ENCODE measurements at regions of chr17 and their contacts with region 1.

Region 1: GRCh38 chr17:83200202-83200699 is 120.8 kb downstream of the METRNL start:
- DNase-seq: peak in 4 of 5 donors; percentile 58 to 83 (median 72)
- H3K4me3 ChIP-seq: peak overlapping the region; percentile 51
- H3K4me3 Mint-ChIP-seq: peak overlapping the region; percentile 85 to 95 (median 89)
- H3K27ac ChIP-seq: peak overlapping the region; percentile 90
- H3K27ac Mint-ChIP-seq: peak overlapping the region; percentile 95 to 99 (median 98)
- H3K4me1 ChIP-seq: peaks cover 37% of the 10 kb centered on the region
- H3K4me1 Mint-ChIP-seq: peaks cover 30 to 50% (median 43%) of the 10 kb centered on the region in 3 donors
- H3K27me3 ChIP-seq: no peaks in the 10 kb centered on the region
- H3K27me3 Mint-ChIP-seq: peaks cover 0 to 6% of the 10 kb centered on the region in 2 donors

Region 2: GRCh38 chr17:82781894-82782274 is 418.4 kb before region 1 on chr17:
- CTCF ChIA-PET with region 1: interaction called, 15 read pairs
- POLR2A ChIA-PET with region 1: no interaction called
- DNase-seq: peak; percentile 76 to 90 (median 80)
- H3K4me3 ChIP-seq: no peak overlapping the region
- H3K4me3 Mint-ChIP-seq: no peak overlapping the region
- H3K27ac ChIP-seq: no peak overlapping the region
- H3K27ac Mint-ChIP-seq: peak overlapping the region in 6 of 8 donors; percentile 6 to 84 (median 37)
- H3K4me1 ChIP-seq: peaks cover 6% of the 10 kb centered on the region
- H3K4me1 Mint-ChIP-seq: peaks cover 15 to 22% (median 20%) of the 10 kb centered on the region in 3 donors
- H3K27me3 ChIP-seq: no peaks in the 10 kb centered on the region
- H3K27me3 Mint-ChIP-seq: peaks cover 0 to 1% of the 10 kb centered on the region in 2 donors

Region 3: DNA sequence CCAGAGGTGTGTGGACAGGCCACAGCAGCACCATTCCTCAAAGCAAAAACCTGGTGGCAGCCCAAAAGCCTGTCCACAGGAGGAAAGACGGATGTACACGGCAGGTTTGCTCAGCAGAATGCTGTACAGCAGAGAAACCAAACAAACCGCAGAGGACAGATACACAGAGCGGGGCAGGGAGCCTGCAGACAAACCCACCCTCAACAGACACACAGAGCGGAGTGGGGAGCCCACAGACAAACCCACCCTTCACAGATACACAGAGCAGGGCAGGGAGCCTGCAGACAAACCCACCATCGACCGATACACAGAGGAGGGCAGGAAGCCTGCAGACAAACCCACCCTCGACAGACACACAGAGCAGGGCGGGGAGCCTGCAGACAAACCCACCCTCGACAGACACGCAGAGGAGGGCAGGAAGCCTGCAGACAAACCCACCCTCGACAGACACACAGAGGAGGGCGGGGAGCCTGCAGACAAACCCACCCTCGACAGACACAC is 173.9 kb before region 1 on chr17:
- CTCF ChIA-PET with region 1: no interaction called
- POLR2A ChIA-PET with region 1: no interaction called
- DNase-seq: peak in 2 of 5 donors; percentile 18 to 41
- H3K4me3 ChIP-seq: no peak overlapping the region
- H3K4me3 Mint-ChIP-seq: peak overlapping the region in 5 of 7 donors; percentile 22 to 84 (median 65)
- H3K27ac ChIP-seq: no peak overlapping the region
- H3K27ac Mint-ChIP-seq: peak overlapping the region in 7 of 8 donors; percentile 18 to 83 (median 70)
- H3K4me1 ChIP-seq: no peaks in the 10 kb centered on the region
- H3K4me1 Mint-ChIP-seq: peaks cover 27 to 36% (median 34%) of the 10 kb centered on the region in 3 donors
- H3K27me3 ChIP-seq: no peaks in the 10 kb centered on the region
- H3K27me3 Mint-ChIP-seq: peaks cover 0 to 3% of the 10 kb centered on the region in 2 donors

Region 4: DNA sequence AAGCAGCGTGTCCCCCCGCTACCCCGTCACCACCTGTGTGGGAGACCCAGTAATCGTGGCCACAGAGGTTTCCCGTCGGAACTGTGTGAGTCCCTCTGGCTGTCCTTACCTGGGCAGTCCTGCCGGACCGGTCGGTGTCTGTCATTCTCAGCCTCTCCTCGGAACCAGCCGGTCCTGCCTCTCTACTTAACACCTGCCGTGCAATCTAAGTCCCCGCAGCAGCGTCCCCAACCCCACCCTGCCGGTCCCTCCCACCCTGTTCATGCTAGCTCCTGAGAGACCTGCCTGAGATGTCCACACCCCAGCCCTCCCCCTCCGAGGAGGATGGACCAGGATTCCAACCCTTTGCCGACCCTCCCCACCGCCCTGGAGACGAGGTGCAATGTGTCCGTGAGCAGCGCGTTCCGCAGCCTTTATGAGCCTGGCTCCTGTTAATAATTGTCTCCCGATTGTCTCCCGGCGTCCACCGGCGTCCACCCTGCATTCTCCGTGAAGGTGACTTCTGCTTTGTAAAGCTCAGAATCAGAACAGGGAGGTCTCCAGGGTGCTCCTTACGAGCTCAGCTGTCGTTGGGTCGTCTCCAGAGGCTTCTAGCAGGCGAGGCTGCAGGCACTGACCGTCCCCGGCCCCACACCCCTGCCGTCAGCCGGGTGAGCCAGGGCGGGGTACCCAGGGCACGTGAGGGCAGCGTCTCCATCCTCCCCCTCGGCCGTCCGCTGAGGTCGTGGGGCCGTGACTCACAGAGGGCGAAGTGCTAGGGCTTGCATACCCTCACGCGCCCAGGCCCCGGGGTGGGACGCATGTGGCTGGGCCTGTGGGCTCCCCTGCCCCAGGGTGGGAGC is 110.7 kb before region 1 on chr17:
- CTCF ChIA-PET with region 1: no interaction called
- POLR2A ChIA-PET with region 1: no interaction called
- DNase-seq: no peak
- H3K4me3 ChIP-seq: no peak overlapping the region
- H3K4me3 Mint-ChIP-seq: peak overlapping the region in 1 of 7 donors; percentile 76
- H3K27ac ChIP-seq: no peak overlapping the region
- H3K27ac Mint-ChIP-seq: peak overlapping the region in 1 of 8 donors; percentile 88
- H3K4me1 ChIP-seq: peaks cover 14% of the 10 kb centered on the region
- H3K4me1 Mint-ChIP-seq: peaks cover 5 to 38% (median 17%) of the 10 kb centered on the region in 3 donors
- H3K27me3 ChIP-seq: no peaks in the 10 kb centered on the region
- H3K27me3 Mint-ChIP-seq: no peaks in the 10 kb centered on the region

Region 5: GRCh38 chr17:83174285-83175118 is 25.7 kb before region 1 on chr17:
- CTCF ChIA-PET with region 1: no interaction called
- POLR2A ChIA-PET with region 1: no interaction called
- DNase-seq: no peak
- H3K4me3 ChIP-seq: no peak overlapping the region
- H3K4me3 Mint-ChIP-seq: no peak overlapping the region
- H3K27ac ChIP-seq: no peak overlapping the region
- H3K27ac Mint-ChIP-seq: peak overlapping the region in 1 of 8 donors; percentile 43
- H3K4me1 ChIP-seq: no peaks in the 10 kb centered on the region
- H3K4me1 Mint-ChIP-seq: no peaks in the 10 kb centered on the region
- H3K27me3 ChIP-seq: no peaks in the 10 kb centered on the region
- H3K27me3 Mint-ChIP-seq: peaks cover 3 to 16% of the 10 kb centered on the region in 2 donors